Mammary epithelial cell (primary cell): ENCODE measurements at regions of chr4 and their contacts with region 1.

Region 1: GRCh38 chr4:47525154-47525819 is 40.2 kb downstream of the ATP10D start:
- DNase-seq: peak; percentile 79
- H3K4me3 ChIP-seq: peak overlapping the region in 1 of 3 experiments; percentile 22
- H3K27ac ChIP-seq: peak overlapping the region; percentile 86
- H3K4me1 ChIP-seq: peaks cover 45% of the 10 kb centered on the region
- H3K27me3 ChIP-seq: no peaks in the 10 kb centered on the region
- CTCF ChIP-seq: no peak

Region 2: DNA sequence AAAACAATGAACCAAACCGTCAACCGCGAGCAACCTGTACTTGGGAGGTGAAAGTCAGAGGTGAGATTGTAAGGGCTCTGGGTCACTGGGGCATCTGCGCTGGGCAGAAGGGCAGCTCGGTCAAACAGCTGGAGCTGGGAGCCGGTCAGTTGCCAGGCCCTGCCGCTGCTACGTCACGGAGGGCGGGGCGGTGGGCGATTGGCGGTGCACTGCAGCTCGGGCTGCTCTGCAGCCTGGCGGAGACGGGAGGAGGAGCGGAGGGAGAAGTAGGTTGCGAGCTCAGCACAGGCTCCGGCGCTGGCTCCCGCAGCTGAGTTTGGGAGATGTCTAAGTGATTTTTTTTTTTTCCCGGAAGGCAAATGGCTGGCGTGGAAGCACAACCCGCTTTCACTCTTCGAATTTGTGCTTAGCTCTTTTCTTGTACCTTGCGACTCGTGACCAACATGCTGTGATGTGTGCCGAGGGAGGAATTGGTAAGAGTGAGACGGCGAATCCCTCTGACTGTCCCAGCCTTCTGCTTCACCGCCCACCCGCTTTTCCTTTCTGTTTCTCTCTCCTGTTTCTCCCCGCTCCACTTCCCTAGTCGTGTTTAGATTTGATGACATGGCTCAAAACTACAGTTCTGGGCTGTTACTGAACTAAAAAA is 40.1 kb before region 1 on chr4 and contains the start of gene ATP10D:
- CTCF ChIA-PET with region 1: no interaction called
- dilution Hi-C with region 1: no loop called
- in situ Hi-C with region 1: no loop called
- intact Hi-C with region 1: loop called (anchors 5 kb)
- DNase-seq: peak; percentile 91
- H3K4me3 ChIP-seq: peak within 1 kb of the TSS; percentile 45 to 91 (median 79)
- H3K27ac ChIP-seq: peak within 1 kb of the TSS; percentile 85
- H3K4me1 ChIP-seq: peaks cover 25% of the 10 kb centered on the region
- H3K27me3 ChIP-seq: no peaks in the 10 kb centered on the region
- CTCF ChIP-seq: peak in 1 of 2 donors; percentile 36
- total RNA-seq, gene ATP10D: 71.6 to 88.4 TPM

Region 3: DNA sequence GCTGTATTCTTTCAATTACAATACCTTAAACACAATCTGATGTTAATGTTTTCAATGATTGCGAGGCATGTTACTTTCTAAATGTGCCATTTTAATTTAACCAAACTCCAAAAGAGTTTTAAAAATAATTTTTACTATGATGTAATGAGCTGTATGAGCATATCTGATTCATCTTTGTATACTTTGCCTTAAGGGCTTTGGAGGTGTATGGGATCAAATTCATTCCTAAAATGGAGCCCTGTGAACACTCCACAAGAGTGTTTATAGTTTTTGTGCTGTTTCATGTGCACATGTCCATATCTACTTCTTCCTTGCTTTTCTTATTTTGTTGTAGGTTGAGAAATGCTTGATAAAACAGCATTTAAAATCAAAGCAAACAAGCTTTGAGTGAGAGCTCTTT is 42.2 kb after region 1 on chr4:
- CTCF ChIA-PET with region 1: no interaction called
- dilution Hi-C with region 1: no loop called
- in situ Hi-C with region 1: no loop called
- intact Hi-C with region 1: loop called (anchors 5 kb)
- DNase-seq: no peak
- H3K4me3 ChIP-seq: no peak overlapping the region
- H3K27ac ChIP-seq: no peak overlapping the region
- H3K4me1 ChIP-seq: peaks cover 18% of the 10 kb centered on the region
- H3K27me3 ChIP-seq: no peaks in the 10 kb centered on the region
- CTCF ChIP-seq: no peak

Region 4: GRCh38 chr4:49000806-49001205 is 1475.5 kb after region 1 on chr4:
- CTCF ChIA-PET with region 1: no interaction called
- dilution Hi-C with region 1: no loop called
- in situ Hi-C with region 1: no loop called
- intact Hi-C with region 1: no loop called
- DNase-seq: peak; percentile 88
- H3K4me3 ChIP-seq: no peak overlapping the region
- H3K27ac ChIP-seq: no peak overlapping the region
- H3K4me1 ChIP-seq: no peaks in the 10 kb centered on the region
- H3K27me3 ChIP-seq: no peaks in the 10 kb centered on the region
- CTCF ChIP-seq: no peak